Posterior vena cava (tissue), 2 donors: ENCODE measurements at regions of chr1 and their contacts with region 1.

Region 1: DNA sequence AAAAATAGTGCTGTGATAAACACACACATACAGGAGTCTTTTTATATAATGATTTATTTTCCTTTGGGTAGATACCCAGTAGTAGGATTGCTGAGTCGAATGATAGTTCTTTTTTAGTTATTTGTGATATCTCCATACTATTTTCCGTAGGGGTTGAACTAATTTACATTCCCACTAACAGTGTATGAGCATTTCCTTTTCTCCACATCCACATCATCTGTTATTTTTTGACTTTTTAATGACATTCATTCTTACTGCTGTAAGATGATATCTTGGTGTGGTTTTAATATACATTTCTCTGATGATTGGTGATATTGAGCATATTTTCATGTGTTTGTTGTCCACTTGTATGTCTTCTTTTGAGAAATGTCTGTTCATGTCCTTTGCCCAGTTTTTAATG is 78.3 kb downstream of the NIBAN1 start:
- DNase-seq: no peak

Region 2: GRCh38 chr1:184965944-184966860 is 70.2 kb after region 1 on chr1:
- intact Hi-C with region 1: loop called in 1 of 2 experiments (anchors 2 kb)
- DNase-seq: no peak